Common myeloid progenitor, CD34-positive (primary cell): ENCODE measurements at regions of chr11 and their contacts with region 1.

Region 1: GRCh38 chr11:17150521-17150920 is 57.3 kb downstream of the PIK3C2A start:
- DNase-seq: no peak
- H3K4me3 ChIP-seq: no peak overlapping the region
- H3K27ac ChIP-seq: no peak overlapping the region
- H3K4me1 ChIP-seq: peaks cover 11 to 49% (median 22%) of the 10 kb centered on the region in 4 experiments
- H3K27me3 ChIP-seq: no peaks in the 10 kb centered on the region

Region 2: GRCh38 chr11:17135916-17136683 is 14.4 kb before region 1 on chr11:
- CTCF ChIA-PET with region 1: interaction called, 12 read pairs
- POLR2A ChIA-PET with region 1: interaction called, 5 read pairs
- DNase-seq: no peak
- H3K4me3 ChIP-seq: no peak overlapping the region
- H3K27ac ChIP-seq: no peak overlapping the region
- H3K4me1 ChIP-seq: peaks cover 0 to 2% (median 0%) of the 10 kb centered on the region in 4 experiments
- H3K27me3 ChIP-seq: no peaks in the 10 kb centered on the region